CD8-positive, alpha-beta memory T cell (primary cell): ENCODE measurements at regions of chr19 and their contacts with region 1.

Region 1: DNA sequence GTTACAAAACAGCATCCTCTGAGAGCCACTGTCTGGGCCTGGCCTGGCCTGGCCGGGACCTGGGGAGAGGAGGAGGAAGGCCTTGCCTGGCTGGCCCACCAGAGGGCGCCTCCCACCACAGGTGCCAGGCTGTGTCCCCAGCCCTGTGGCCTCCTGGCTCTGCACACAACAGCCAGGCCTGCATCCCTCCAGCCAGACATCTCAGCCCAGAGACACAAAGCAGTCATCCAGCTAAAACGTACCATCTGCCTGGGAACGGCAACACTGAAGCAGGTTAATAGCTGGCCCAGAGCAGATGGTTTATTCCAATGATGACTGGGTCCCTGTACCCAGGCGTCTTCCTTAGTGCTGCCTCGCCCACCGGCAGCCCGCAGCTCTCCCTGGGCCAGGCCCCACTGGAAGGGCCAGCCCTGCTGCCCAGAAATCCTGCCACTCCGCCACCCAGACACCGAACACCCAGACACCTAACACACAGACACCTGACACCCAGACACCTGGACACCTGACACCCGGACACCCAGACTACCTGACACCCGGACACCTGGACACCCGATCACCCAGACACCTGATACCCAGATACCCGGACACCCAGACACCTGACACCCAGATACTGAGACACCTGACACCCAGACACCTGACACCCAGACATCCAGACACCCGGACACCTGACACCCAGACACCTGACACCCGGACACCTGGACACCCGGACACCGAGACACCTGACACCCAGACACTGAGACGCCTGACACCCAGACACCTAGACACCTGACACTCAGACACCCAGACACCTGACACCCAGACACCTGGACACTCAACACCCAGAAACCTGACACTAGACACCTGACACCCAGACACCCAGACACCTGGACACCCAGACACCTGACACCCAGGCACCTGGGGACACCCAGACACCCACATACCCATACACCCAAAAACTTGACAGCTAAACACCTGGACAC is 20.1 kb downstream of the C19orf12 start:
- DNase-seq: peak; percentile 75 to 87 (median 78)
- H3K4me3 ChIP-seq: no peak overlapping the region
- H3K4me3 Mint-ChIP-seq: no peak overlapping the region
- H3K27ac ChIP-seq: no peak overlapping the region
- H3K27ac Mint-ChIP-seq: peak overlapping the region; percentile 37 to 88 (median 72)
- H3K4me1 ChIP-seq: peaks cover 13% of the 10 kb centered on the region
- H3K4me1 Mint-ChIP-seq: peaks cover 13 to 21% (median 15%) of the 10 kb centered on the region in 3 donors
- H3K27me3 ChIP-seq: no peaks in the 10 kb centered on the region
- H3K27me3 Mint-ChIP-seq: no peaks in the 10 kb centered on the region

Region 2: DNA sequence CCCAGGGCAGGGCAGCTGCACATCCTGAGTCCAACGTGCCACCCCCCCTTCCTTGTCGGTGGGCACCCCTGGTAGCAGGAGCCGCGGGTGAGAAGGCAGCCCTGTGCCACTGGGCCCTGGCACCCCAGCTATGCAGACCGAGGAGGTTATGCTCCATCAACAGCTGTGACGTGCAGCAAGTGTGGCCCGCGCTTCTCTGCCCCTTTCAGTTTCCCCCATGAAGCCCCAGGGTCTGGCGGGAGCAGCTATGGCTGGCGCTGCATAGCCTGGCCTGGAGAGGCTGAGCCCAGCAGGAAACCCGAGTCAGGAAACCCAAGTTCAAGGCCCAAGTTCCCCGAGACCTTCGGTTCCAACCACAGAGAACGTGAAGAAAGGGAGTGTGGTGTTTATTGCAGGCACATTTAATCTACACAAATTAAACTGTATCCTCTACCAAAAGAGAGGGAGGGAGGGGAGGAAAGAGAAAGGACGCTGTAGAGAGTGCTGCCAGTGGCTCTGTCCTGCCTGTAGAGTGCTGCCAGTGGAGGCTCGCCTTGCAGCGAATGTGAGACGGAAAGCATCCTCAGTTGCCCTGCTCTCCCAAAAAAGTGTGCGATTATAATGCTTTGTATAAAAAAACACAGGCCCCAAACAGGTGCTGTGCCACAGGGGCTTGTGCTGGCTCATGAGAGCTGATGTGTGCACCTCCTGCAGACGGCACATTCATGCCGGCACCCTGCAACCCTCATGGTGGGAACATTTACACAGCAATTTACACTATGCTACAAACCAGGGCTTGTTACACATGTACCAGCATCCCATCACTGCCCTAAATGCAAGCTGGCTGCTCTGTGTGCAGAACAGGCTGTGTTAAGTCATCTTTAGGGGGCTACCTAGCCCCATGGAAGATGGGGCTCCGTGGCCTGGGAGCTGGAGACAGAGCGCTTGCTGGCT is 72.5 kb before region 1 on chr19:
- CTCF ChIA-PET with region 1: interaction called, 29 read pairs
- POLR2A ChIA-PET with region 1: no interaction called
- DNase-seq: peak; percentile 30 to 64 (median 38)
- H3K4me3 ChIP-seq: peak overlapping the region; percentile 0
- H3K4me3 Mint-ChIP-seq: peak overlapping the region; percentile 33 to 84 (median 76)
- H3K27ac ChIP-seq: no peak overlapping the region
- H3K27ac Mint-ChIP-seq: peak overlapping the region; percentile 85 to 97 (median 97)
- H3K4me1 ChIP-seq: peaks cover 54% of the 10 kb centered on the region
- H3K4me1 Mint-ChIP-seq: peaks cover 54 to 63% (median 61%) of the 10 kb centered on the region in 3 donors
- H3K27me3 ChIP-seq: no peaks in the 10 kb centered on the region
- H3K27me3 Mint-ChIP-seq: no peaks in the 10 kb centered on the region

Region 3: GRCh38 chr19:29636553-29637360 is 58.2 kb before region 1 on chr19:
- CTCF ChIA-PET with region 1: no interaction called
- POLR2A ChIA-PET with region 1: no interaction called
- DNase-seq: no peak
- H3K4me3 ChIP-seq: no peak overlapping the region
- H3K4me3 Mint-ChIP-seq: no peak overlapping the region
- H3K27ac ChIP-seq: no peak overlapping the region
- H3K27ac Mint-ChIP-seq: no peak overlapping the region
- H3K4me1 ChIP-seq: no peaks in the 10 kb centered on the region
- H3K4me1 Mint-ChIP-seq: no peaks in the 10 kb centered on the region
- H3K27me3 ChIP-seq: no peaks in the 10 kb centered on the region
- H3K27me3 Mint-ChIP-seq: peaks cover 0 to 2% of the 10 kb centered on the region in 2 donors

Region 4: DNA sequence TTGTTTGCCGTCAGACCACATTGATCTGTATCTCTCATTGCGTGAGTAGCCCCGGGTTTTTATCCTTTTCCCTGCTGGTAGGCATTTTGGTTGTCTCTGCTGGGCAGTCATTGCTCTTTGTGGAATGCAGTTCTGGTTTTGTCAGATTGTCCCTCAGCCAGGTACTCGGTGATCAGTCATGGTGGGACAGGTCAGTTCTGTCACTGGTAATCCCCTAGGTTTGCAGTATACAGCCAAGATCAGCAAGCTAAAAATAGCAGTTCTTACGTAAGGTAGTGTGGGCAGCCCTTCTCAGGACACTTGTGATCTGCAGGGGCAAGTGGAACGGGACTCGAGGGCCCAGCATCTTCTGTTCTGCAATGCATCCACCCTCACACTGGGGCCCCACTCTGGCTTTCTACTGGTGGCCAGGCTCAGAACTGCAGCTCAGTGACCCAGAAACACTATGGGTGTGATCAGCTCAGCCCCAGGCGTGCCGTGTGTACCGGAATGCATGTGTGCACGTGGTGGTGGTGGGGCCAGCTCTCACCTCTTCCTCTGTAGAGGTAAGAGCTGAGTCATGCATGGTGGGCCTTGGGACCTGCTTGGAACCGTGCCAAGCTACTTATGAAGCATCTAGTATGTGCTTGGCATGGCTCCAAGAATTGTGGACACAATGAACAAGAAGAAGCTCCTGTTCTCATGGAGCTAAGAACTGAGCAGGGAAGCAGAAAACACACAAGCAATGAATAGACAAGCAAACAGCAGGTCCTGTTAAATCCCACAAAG is 23.4 kb before region 1 on chr19:
- CTCF ChIA-PET with region 1: interaction called, 48 read pairs
- POLR2A ChIA-PET with region 1: interaction called, 3 read pairs
- DNase-seq: peak; percentile 73 to 96 (median 80)
- H3K4me3 ChIP-seq: peak overlapping the region; percentile 54
- H3K4me3 Mint-ChIP-seq: peak overlapping the region; percentile 61 to 95 (median 88)
- H3K27ac ChIP-seq: peak overlapping the region; percentile 77
- H3K27ac Mint-ChIP-seq: peak overlapping the region; percentile 93 to 100 (median 98)
- H3K4me1 ChIP-seq: peaks cover 99% of the 10 kb centered on the region
- H3K4me1 Mint-ChIP-seq: peaks cover 77 to 96% (median 87%) of the 10 kb centered on the region in 3 donors
- H3K27me3 ChIP-seq: no peaks in the 10 kb centered on the region
- H3K27me3 Mint-ChIP-seq: no peaks in the 10 kb centered on the region

Region 5: GRCh38 chr19:29714953-29715700 is 20.2 kb after region 1 on chr19 and contains the start of gene C19orf12:
- CTCF ChIA-PET with region 1: interaction called, 175 read pairs
- POLR2A ChIA-PET with region 1: interaction called, 12 read pairs
- DNase-seq: peak; percentile 43 to 85 (median 68)
- H3K4me3 ChIP-seq: peak within 1 kb of the TSS; percentile 83
- H3K4me3 Mint-ChIP-seq: peak within 1 kb of the TSS; percentile 88 to 95 (median 93)
- H3K27ac ChIP-seq: peak within 1 kb of the TSS; percentile 95
- H3K27ac Mint-ChIP-seq: peak within 1 kb of the TSS; percentile 93 to 100 (median 96)
- H3K4me1 ChIP-seq: peaks cover 54% of the 10 kb centered on the region
- H3K4me1 Mint-ChIP-seq: peaks cover 54 to 61% (median 60%) of the 10 kb centered on the region in 3 donors
- H3K27me3 ChIP-seq: no peaks in the 10 kb centered on the region
- H3K27me3 Mint-ChIP-seq: no peaks in the 10 kb centered on the region
- total RNA-seq, gene C19orf12: 32.3 to 35.3 TPM

Region 6: GRCh38 chr19:29731331-29731850 is 36.4 kb after region 1 on chr19:
- CTCF ChIA-PET with region 1: interaction called, 11 read pairs
- POLR2A ChIA-PET with region 1: no interaction called
- DNase-seq: no peak
- H3K4me3 ChIP-seq: no peak overlapping the region
- H3K4me3 Mint-ChIP-seq: no peak overlapping the region
- H3K27ac ChIP-seq: no peak overlapping the region
- H3K27ac Mint-ChIP-seq: no peak overlapping the region
- H3K4me1 ChIP-seq: no peaks in the 10 kb centered on the region
- H3K4me1 Mint-ChIP-seq: no peaks in the 10 kb centered on the region
- H3K27me3 ChIP-seq: peaks cover 11% of the 10 kb centered on the region
- H3K27me3 Mint-ChIP-seq: peaks cover 8 to 21% of the 10 kb centered on the region in 2 donors